ENCODE measurements at regions of chr12 and their contacts with region 1.

Region 1: GRCh38 chr12:107748472-107748871 is 12.5 kb downstream of the PRDM4 start:
- DNase-seq: no peak
- ATAC-seq: peak in 1 of 4 donors; percentile 86
- H3K4me3 ChIP-seq: peak overlapping the region in 1 of 12 donors; percentile 3
- H3K27ac ChIP-seq: peak overlapping the region in 1 of 12 donors; percentile 46
- H3K4me1 ChIP-seq: peaks cover 0 to 19% (median 2%) of the 10 kb centered on the region in 12 donors
- H3K27me3 ChIP-seq: no peaks in the 10 kb centered on the region
- CTCF ChIP-seq: no peak
- POLR2A ChIP-seq: no peak

Region 2: GRCh38 chr12:107702106-107702505 is 46.4 kb before region 1 on chr12:
- intact Hi-C with region 1: loop called in 3 of 10 experiments (anchors 5 to 10 kb)
- DNase-seq: no peak
- ATAC-seq: no peak
- H3K4me3 ChIP-seq: no peak overlapping the region
- H3K27ac ChIP-seq: no peak overlapping the region
- H3K4me1 ChIP-seq: no peaks in the 10 kb centered on the region
- H3K27me3 ChIP-seq: no peaks in the 10 kb centered on the region
- CTCF ChIP-seq: no peak
- POLR2A ChIP-seq: no peak

Region 3: DNA sequence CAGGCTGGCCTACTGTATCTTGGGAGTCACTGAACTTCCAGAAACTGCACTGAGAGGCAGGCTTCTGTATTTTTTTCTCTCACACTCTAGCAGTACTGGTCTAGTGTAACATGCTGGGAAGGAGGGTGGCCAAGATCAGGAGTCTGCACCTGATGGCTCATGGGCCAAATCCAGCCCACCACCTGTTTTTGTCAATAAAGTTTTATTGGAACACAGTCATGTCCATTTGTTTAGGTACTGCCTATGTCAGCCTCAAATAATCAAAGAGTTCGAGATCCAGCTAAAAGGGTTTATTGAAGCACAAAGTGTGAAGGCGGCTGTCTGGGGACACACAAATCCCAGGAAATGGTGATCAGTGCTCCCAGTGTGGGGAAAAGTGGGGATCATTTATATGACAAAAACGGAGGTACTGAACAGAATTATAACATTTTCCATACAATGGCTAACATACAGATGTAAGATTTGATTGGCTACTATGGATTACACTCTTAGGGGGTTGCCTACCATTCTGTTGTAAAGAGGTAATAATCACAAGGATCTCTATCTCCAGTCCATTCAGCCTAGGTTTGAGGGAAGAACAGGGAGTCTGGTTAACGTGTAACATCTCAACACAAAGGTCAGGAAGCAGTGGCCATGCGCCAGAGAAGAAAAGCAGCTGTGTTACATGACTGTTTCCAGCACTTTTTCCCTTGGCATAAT is 1316.8 kb after region 1 on chr12:
- intact Hi-C with region 1: no loop called
- DNase-seq: no peak
- ATAC-seq: no peak
- H3K4me3 ChIP-seq: no peak overlapping the region
- H3K27ac ChIP-seq: no peak overlapping the region
- H3K4me1 ChIP-seq: no peaks in the 10 kb centered on the region
- H3K27me3 ChIP-seq: no peaks in the 10 kb centered on the region
- CTCF ChIP-seq: no peak
- POLR2A ChIP-seq: no peak